Naive thymus-derived CD8-positive, alpha-beta T cell (primary cell): ENCODE measurements at regions of chr5 and their contacts with region 1.

Region 1: GRCh38 chr5:137754126-137754960 is at the start of gene HNRNPA0:
- DNase-seq: peak; percentile 93 to 100 (median 97)
- ATAC-seq: peak; percentile 83
- H3K4me3 Mint-ChIP-seq: peak within 1 kb of the TSS; percentile 96 to 100 (median 99)
- H3K27ac Mint-ChIP-seq: peak within 1 kb of the TSS; percentile 100
- H3K4me1 Mint-ChIP-seq: peaks cover 16 to 39% (median 27%) of the 10 kb centered on the region in 4 donors
- H3K27me3 Mint-ChIP-seq: no peaks in the 10 kb centered on the region
- polyA plus RNA-seq, gene HNRNPA0: 16.1 to 17.9 (median 16.5) TPM

Region 2: GRCh38 chr5:137651022-137651421 is 103.3 kb before region 1 on chr5:
- POLR2A ChIA-PET with region 1: no interaction called
- DNase-seq: no peak
- ATAC-seq: no peak
- H3K4me3 Mint-ChIP-seq: no peak overlapping the region
- H3K27ac Mint-ChIP-seq: no peak overlapping the region
- H3K4me1 Mint-ChIP-seq: no peaks in the 10 kb centered on the region
- H3K27me3 Mint-ChIP-seq: no peaks in the 10 kb centered on the region

Region 3: DNA sequence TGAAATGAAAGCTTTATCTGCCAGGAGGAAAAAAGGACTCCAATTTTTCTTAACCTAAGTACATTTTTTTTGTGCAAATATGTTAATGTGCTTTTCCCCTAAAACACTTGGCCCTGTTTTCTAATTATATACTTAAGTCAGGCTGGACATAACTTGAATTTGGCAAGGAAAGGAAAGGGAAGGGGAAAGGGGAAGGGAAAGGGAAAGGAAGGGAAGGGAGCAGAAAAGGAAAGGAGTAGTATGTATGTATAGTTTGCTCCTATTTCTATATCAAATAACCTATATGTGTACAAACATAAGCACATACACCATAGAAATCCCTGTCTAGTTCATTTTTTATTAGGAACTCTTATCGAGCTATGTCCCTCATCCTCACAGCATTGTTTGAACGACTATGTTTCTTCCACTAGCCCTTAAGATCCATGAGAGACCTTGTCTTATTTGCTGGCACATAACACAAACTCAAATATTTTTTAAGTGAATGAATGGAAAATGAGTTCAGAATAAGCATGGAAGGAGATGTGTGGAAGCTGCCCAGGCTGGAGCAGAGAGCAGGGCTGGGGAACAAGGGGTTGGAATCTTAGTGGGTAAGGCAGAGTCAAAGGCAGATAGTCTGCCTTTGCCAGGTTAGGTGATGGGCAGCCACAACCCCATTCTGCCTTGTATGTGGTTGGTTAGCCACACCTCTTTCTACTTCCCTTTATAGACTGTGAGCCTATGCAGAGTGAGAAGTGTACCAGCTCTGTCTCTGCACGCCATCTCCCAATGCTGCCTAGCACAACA is 88.5 kb before region 1 on chr5:
- POLR2A ChIA-PET with region 1: interaction called, 16 read pairs
- DNase-seq: peak; percentile 18 to 71 (median 37)
- ATAC-seq: peak; percentile 100
- H3K4me3 Mint-ChIP-seq: peak overlapping the region in 5 of 10 donors; percentile 14 to 61 (median 21)
- H3K27ac Mint-ChIP-seq: peak overlapping the region; percentile 12 to 89 (median 68)
- H3K4me1 Mint-ChIP-seq: peaks cover 12 to 19% (median 18%) of the 10 kb centered on the region in 4 donors
- H3K27me3 Mint-ChIP-seq: no peaks in the 10 kb centered on the region

Region 4: DNA sequence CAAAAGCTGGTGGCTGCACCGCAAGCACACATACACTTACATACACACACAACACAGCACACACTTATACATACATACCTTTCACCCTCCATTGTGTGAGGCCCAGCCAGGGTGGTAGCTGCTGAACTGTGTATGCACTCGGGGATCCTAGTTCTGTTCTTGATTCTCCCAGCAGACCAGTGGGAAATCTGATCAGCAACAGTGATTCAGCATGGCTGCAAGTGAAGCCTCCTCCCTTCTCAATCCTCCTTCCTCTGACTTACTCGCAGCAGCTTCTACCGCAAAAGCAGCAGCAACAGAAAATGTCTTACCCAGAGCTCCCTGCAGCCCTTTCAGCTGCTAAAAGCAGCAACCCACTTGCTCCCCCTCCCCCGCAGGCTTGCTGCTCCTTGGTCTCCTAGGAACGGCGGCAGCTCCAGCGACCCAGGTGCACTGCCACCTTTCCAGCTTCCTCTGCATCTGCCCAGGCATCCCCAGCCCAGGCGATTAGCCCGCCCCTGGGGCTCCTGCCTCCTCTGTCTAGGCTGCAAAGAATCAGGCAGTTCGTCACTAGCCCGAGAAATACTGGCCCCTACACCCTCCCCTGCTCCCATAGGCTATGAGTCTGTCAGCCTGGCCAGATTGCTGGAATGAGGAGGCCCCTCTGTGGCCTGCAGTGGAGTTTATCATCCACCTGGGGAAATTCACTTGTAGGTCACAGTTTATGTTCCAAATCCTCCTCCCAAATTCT is 18.6 kb before region 1 on chr5 and contains the start of gene KLHL3:
- POLR2A ChIA-PET with region 1: interaction called, 88 read pairs
- DNase-seq: peak; percentile 13 to 67 (median 27)
- ATAC-seq: peak; percentile 38 to 49
- H3K4me3 Mint-ChIP-seq: no peak within 1 kb of the TSS
- H3K27ac Mint-ChIP-seq: no peak within 1 kb of the TSS
- H3K4me1 Mint-ChIP-seq: peaks cover 0 to 29% (median 20%) of the 10 kb centered on the region in 4 donors
- H3K27me3 Mint-ChIP-seq: no peaks in the 10 kb centered on the region
- polyA plus RNA-seq, gene KLHL3: 2.7 to 8.1 (median 4.5) TPM

Region 5: DNA sequence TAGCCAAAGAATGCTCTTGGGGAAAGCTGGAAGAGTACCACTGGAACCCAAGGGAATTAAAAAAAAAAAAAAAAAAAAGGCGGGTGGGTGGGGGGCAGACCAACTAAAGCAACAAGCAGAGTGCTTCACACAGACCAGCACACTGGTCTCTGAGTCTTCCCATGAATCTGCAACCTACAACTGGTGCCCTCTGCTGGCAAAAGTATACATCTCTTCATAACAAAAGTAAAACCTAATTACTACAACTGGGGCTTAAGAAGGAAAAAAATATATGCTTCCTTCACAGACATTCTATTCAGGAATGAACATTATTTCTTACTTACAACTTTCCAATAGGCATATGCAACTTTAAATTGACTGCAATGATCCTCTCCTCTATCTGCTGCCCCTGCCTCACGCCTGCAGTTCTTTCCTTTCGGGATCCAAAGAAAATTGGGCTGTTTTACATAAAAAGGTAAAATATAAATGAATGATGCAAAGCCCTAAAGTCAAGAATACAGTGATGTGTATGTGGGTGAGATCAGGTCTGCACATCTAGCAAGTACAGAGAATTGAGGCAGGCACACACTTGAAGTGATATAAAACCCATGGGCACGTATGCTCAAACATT is 11.2 kb before region 1 on chr5:
- POLR2A ChIA-PET with region 1: interaction called, 88 read pairs
- DNase-seq: peak; percentile 20 to 82 (median 58)
- ATAC-seq: peak; percentile 92 to 94
- H3K4me3 Mint-ChIP-seq: no peak overlapping the region
- H3K27ac Mint-ChIP-seq: peak overlapping the region in 2 of 10 donors; percentile 21 to 44
- H3K4me1 Mint-ChIP-seq: peaks cover 0 to 30% (median 13%) of the 10 kb centered on the region in 4 donors
- H3K27me3 Mint-ChIP-seq: no peaks in the 10 kb centered on the region